ENCODE measurements at regions of chr5 and their contacts with region 1.

Region 1: DNA sequence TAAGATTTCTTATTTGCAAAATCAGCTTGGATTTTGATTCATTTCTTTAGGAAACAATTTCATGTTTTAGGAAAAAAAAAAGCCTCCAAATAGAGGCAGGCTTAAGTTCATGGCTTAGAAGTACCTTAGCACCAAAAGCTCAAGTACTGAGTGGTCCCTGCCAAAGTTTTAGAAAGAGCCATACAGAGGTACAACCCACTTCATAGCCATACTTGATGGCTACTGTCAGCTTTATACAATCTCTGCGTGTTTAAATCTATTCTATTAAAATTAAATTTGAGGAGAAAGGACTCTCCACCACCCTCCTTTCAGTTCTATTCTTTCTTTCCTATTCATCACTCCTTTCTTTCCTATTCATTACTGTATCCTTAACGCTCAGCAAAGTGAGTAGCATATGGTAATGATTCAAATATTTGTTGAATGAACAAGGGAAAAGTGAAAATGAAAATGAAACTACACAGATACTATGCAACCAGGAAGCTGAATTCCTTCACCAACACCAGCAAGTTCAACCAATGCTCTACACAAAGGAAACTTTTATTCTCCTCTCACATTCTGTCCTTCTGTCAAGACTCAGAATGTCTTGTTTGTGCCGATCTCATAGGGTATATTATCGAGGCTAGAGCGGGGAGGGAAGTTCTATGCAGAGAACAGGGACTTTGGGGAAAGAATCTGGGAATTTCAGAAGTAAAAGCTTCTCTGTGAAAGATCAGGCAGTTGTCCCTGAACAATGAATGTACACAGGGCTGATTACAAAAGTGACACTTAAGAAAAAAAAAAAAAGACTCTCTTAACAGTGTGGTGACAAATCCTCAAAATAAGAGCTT is 138.6 kb upstream of the SPEF2 start:
- DNase-seq: peak; percentile 50
- ATAC-seq: peak; percentile 75
- H3K4me3 ChIP-seq: peak overlapping the region; percentile 32 to 54 (median 39); a peak in 5 of 6 replicates
- H3K27ac ChIP-seq: peak overlapping the region; percentile 69
- H3K4me1 ChIP-seq: peaks cover 50% of the 10 kb centered on the region
- H3K27me3 ChIP-seq: no peaks in the 10 kb centered on the region
- CTCF ChIP-seq: no peak
- EP300 ChIP-seq: no peak
- POLR2A ChIP-seq: no peak
- RAD21 ChIP-seq: no peak

Region 2: DNA sequence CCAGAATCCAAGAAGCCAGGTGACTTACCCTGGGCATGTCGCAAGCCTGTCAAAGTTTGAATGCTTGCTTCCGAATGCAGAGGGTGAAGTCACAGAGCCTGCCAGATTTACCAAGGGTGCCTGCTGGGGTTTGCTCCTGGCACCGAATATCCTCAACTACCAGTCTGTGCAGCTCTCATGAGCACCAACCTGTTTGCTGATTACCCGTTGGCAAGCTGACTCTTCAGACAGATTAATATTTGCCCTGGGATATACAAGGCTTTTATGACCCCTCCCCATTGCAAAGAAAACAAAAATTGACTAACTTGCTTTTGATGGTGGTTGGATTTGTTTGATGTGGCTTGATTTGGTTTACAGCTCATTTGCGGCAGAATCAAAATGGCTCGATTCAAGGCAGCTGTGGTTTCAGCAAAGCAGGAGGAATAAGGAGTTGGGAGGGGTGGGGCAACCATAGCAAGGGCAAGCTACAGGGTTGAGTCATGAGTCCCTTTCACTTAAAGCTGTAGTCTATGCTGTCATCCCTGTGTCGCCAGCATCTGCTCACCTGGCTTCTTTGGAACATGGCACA is 349.1 kb before region 1 on chr5:
- CTCF ChIA-PET with region 1: no interaction called
- POLR2A ChIA-PET with region 1: no interaction called
- in situ Hi-C with region 1: no loop called
- intact Hi-C with region 1: loop called (anchors 10 kb)
- DNase-seq: no peak
- ATAC-seq: no peak
- H3K4me3 ChIP-seq: no peak overlapping the region
- H3K27ac ChIP-seq: no peak overlapping the region
- H3K4me1 ChIP-seq: peaks cover 71% of the 10 kb centered on the region
- H3K27me3 ChIP-seq: no peaks in the 10 kb centered on the region
- CTCF ChIP-seq: no peak
- EP300 ChIP-seq: no peak
- POLR2A ChIP-seq: no peak
- RAD21 ChIP-seq: no peak

Region 3: DNA sequence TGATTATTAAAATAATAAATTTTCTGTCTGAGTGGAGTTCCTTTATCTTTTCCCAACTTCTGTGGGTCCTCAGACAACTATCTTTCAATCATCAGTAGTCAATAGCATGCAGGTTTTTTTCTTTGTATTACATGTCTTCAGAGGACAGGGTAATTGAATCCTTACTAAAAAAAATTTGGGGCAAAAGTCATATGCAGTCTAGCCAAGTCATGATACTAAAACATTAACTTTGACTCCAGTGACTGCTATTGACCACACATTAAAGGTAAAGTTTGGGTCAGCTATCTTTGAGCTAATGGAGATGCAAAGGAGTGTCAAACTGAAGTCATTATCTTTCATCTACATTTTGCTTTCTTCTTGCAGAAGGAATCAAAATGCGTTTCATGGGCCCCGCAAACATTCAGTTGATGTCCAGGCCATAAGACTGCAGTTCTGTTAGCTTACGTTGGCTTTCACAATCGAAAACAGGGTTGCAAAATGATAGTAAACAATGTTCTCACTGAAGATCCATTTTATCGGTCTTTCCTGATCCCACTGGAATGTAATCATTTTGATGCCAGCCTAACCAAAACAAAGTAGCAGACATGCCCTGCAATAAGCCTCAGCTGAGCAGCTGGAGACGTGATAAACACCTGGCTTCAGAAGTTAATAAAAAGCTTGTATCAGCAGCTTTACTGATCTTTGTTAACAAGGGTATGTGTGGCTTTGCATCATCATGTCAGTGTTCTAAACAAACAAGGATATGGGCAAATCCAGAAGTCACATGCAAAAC is 62.7 kb before region 1 on chr5:
- CTCF ChIA-PET with region 1: no interaction called
- POLR2A ChIA-PET with region 1: no interaction called
- in situ Hi-C with region 1: no loop called
- intact Hi-C with region 1: loop called (anchors 5 kb)
- DNase-seq: peak; percentile 73
- ATAC-seq: peak; percentile 75
- H3K4me3 ChIP-seq: peak overlapping the region in 1 of 3 experiments; percentile 31; a peak in 2 of 6 replicates
- H3K27ac ChIP-seq: no peak overlapping the region
- H3K4me1 ChIP-seq: peaks cover 45% of the 10 kb centered on the region
- H3K27me3 ChIP-seq: no peaks in the 10 kb centered on the region
- CTCF ChIP-seq: no peak
- EP300 ChIP-seq: peak in 1 of 2 experiments; percentile 54; a peak in 1 of 4 replicates
- POLR2A ChIP-seq: no peak
- RAD21 ChIP-seq: no peak